Cardiac septum (tissue), 1 donor: ENCODE measurements at regions of chr4 and their contacts with region 1.

Region 1: DNA sequence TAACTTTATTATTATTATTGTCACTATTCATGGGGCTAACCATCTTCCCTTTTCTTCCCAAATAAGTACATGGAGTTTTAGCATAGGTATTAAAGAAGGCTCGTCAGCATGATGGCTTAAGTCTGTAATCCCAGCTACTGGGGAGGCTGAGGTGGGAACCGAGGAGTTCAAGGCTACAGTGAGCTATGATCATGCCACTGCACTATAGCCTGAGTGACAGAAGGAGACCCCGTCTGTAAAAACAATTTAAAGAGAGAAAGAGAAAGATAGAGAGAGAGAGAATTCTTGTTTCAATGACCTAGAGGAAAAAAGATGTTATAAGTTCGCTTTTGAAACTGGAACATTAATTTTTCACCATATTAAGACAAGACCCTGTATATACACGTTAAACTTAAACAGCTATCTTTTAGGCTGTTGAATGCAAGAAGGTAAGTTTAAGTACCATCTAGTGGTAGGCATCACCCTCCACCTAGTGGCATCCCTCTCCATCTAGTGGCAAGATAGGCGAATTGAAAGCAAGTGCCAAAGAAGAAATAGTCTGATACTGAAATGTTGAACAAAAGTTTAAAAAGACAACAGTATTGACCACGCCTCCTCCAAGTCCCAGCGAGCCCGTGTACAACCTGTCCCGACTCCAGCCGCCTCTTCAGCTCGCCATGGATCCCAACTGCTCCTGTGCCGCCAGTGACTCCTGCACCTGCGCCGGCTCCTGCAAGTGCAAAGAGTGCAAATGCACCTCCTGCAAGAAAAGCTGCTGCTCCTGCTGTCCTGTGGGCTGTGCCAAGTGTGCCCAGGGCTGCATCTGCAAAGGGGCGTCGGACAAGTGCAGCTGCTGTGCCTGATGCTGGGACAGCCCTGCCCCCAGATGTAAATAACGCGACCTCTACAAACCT is 26.0 kb upstream of the YTHDC1 start:
- DNase-seq: no peak

Region 2: GRCh38 chr4:68271851-68272756 is 103.8 kb before region 1 on chr4:
- intact Hi-C with region 1: loop called (anchors 2 kb)
- DNase-seq: no peak